A549 (cell line): ENCODE measurements at regions of chr20 and their contacts with region 1.

Region 1: DNA sequence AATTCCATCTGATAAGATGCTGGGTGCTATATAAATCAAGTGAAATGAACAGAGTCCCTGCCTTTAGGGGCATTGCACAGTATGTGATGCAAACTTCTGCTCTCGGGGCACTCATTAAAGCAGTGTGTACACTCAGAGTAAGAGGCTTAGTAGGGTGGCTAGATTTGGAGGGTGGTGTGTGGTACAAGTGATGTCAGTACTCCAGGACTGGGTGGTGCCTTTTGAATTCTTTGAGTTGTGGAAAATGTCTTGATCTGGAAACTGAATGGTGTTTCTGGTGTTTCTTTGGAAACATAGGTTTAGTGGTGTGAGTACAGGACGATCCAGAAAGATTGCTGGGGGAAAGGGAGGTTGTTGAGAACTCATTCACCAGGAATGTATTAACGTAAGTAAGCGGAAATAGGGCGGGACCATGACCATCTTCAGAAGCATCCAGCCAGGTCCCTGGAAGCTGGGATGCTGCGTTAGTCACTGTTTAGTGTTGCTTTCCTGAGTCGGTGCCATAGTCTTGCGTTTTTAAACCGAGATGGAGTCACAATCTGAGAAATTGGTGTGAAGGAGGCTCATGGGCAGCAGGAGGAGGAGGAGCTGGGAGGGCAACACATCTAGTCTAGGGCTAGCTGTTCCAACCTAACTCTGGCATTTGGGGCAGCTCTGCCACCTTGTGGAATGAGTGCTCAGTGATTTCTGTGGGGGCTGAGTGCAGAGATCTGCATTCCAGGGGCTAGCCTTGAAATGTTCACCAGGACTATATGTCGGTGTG is 70.3 kb downstream of the SCAND1 start:
- DNase-seq: peak; percentile 84 to 97
- ATAC-seq: peak; percentile 93 to 97
- H3K4me3 ChIP-seq: peak overlapping the region; percentile 15
- H3K27ac ChIP-seq: peak overlapping the region; percentile 90 to 93
- H3K4me1 ChIP-seq: peaks cover 58% of the 10 kb centered on the region
- CTCF ChIP-seq: peak; percentile 89
- EP300 ChIP-seq: peak; percentile 30 to 79; a peak in 2 of 5 replicates
- POLR2A ChIP-seq: no peak
- RAD21 ChIP-seq: peak; percentile 91 to 93

Region 2: GRCh38 chr20:35711588-35712209 is 172.3 kb before region 1 on chr20:
- CTCF ChIA-PET with region 1: interaction called, 15 read pairs
- POLR2A ChIA-PET with region 1: no interaction called
- DNase-seq: no peak
- ATAC-seq: no peak
- H3K4me3 ChIP-seq: no peak overlapping the region
- H3K27ac ChIP-seq: no peak overlapping the region
- H3K4me1 ChIP-seq: peaks cover 20% of the 10 kb centered on the region; the same call in 1 of the 3 replicates
- CTCF ChIP-seq: no peak
- EP300 ChIP-seq: no peak
- POLR2A ChIP-seq: no peak
- RAD21 ChIP-seq: no peak

Region 3: GRCh38 chr20:35726759-35727711 is 156.9 kb before region 1 on chr20:
- CTCF ChIA-PET with region 1: interaction called, 11 read pairs
- POLR2A ChIA-PET with region 1: interaction called, 5 read pairs
- DNase-seq: no peak
- ATAC-seq: no peak
- H3K4me3 ChIP-seq: no peak overlapping the region
- H3K27ac ChIP-seq: no peak overlapping the region
- H3K4me1 ChIP-seq: peaks cover 19% of the 10 kb centered on the region
- CTCF ChIP-seq: no peak
- EP300 ChIP-seq: no peak
- POLR2A ChIP-seq: no peak
- RAD21 ChIP-seq: no peak

Region 4: DNA sequence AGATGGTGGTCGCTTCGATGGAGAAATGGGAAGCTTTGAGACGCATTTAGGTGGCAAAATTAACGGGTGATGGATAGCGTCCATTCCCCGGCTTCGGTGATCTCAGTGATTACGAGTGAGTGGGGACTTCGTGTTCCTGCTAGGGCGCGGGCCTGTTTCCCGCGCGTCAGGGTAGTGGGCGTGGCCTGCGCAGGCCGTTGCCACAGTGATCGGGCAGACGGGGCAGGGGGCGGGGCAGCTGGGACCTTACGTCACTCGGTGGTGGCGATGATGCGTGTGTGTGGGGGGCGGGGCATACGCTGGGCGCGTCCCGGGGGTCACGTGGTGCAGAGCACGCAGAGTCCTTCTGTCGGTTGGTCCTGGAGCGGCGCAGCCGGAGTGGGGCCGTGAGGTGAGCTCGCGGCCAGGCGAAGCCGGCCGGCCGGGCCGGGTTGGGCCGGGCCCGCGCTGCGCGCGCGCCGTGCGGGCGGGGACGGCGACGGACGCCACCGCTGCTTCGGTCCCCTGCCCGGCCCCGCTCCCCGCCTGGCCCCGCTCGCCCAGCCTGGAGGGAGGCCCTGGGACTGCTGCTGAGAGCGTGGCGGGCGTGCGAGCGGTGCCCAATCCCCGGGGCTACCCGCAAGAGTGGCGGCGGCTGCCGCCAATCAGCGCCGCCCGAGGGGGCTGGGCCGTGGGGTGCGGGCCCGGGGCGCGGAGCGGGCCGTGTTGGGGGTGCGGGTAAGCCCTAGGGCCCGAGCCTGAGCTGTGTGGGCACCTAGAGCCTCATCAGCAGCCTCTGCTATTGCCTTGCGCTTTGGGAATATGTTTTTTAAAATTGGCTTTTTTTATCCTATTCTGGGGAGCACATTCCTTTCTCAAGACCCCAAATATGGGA is 112.0 kb before region 1 on chr20 and contains the start of gene PHF20:
- CTCF ChIA-PET with region 1: interaction called, 12 read pairs
- POLR2A ChIA-PET with region 1: interaction called, 4 read pairs
- DNase-seq: peak; percentile 90 to 99
- ATAC-seq: peak; percentile 92
- H3K4me3 ChIP-seq: peak within 1 kb of the TSS; percentile 68
- H3K27ac ChIP-seq: peak within 1 kb of the TSS; percentile 92
- H3K4me1 ChIP-seq: peaks cover 41% of the 10 kb centered on the region
- CTCF ChIP-seq: no peak
- EP300 ChIP-seq: no peak
- POLR2A ChIP-seq: peak; percentile 69
- RAD21 ChIP-seq: no peak
- polyA plus RNA-seq, gene PHF20: 27.9 and 32.8 TPM in 2 replicates

Region 5: GRCh38 chr20:35849706-35850105 is 34.3 kb before region 1 on chr20:
- CTCF ChIA-PET with region 1: interaction called, 14 read pairs
- POLR2A ChIA-PET with region 1: interaction called, 4 read pairs
- DNase-seq: no peak
- ATAC-seq: peak in 1 of 2 experiments; percentile 19; a peak in 1 of 6 replicates
- H3K4me3 ChIP-seq: no peak overlapping the region
- H3K27ac ChIP-seq: 0 out of 6 replicates have a peak overlapping the region, but pooled peaks of 1 of the 2 experiments have one; percentile 4
- H3K4me1 ChIP-seq: peaks cover 11% of the 10 kb centered on the region
- CTCF ChIP-seq: no peak
- EP300 ChIP-seq: no peak
- POLR2A ChIP-seq: no peak
- RAD21 ChIP-seq: no peak

Region 6: DNA sequence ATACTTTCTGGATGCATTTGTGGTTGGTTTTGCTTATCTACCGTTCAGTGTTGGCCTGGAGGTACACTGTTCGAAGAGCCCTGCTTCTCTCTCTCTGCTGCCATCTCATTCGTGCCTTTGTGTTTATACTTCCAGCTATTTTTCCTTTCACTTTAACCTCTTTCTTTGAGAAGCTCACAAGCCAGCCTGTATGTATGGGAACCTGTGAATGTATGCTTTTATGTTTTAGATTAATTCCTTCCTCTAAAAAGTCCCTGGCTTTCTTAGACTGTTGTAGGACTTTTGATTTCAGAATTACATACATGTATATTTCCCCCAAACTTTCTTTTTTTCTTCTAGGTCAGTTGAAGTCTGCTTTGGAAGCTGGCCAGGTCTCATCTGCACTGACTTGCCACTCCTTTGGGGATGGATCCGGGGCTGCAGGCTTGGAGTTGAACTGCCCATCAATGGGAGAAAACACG is 12.6 kb before region 1 on chr20:
- CTCF ChIA-PET with region 1: interaction called, 27 read pairs
- POLR2A ChIA-PET with region 1: interaction called, 5 read pairs
- DNase-seq: peak in 1 of 2 experiments; percentile 50
- ATAC-seq: peak; percentile 70 to 74; a peak in 5 of 6 replicates
- H3K4me3 ChIP-seq: no peak overlapping the region
- H3K27ac ChIP-seq: peak overlapping the region; percentile 60 to 65
- H3K4me1 ChIP-seq: peaks cover 70% of the 10 kb centered on the region
- CTCF ChIP-seq: no peak
- EP300 ChIP-seq: no peak
- POLR2A ChIP-seq: no peak
- RAD21 ChIP-seq: no peak

Region 7: GRCh38 chr20:35978041-35978513 is 94.1 kb after region 1 on chr20:
- CTCF ChIA-PET with region 1: no interaction called
- POLR2A ChIA-PET with region 1: no interaction called
- DNase-seq: no peak
- ATAC-seq: no peak
- H3K4me3 ChIP-seq: no peak overlapping the region
- H3K27ac ChIP-seq: peak overlapping the region; percentile 8 to 28; a peak in 3 of 6 replicates
- H3K4me1 ChIP-seq: peaks cover 13% of the 10 kb centered on the region; the same call in 2 of the 3 replicates
- CTCF ChIP-seq: no peak
- EP300 ChIP-seq: no peak
- POLR2A ChIP-seq: no peak
- RAD21 ChIP-seq: no peak

Region 8: GRCh38 chr20:35994994-35995453 is 111.1 kb after region 1 on chr20:
- CTCF ChIA-PET with region 1: no interaction called
- POLR2A ChIA-PET with region 1: no interaction called
- DNase-seq: peak; percentile 87 to 91
- ATAC-seq: peak; percentile 94 to 97
- H3K4me3 ChIP-seq: no peak overlapping the region
- H3K27ac ChIP-seq: peak overlapping the region; percentile 39 to 55; a peak in 1 of 6 replicates
- H3K4me1 ChIP-seq: peaks cover 23% of the 10 kb centered on the region
- CTCF ChIP-seq: peak; percentile 93
- EP300 ChIP-seq: no peak
- POLR2A ChIP-seq: no peak
- RAD21 ChIP-seq: peak; percentile 96 to 97